MCF 10A (cell line): ENCODE measurements at regions of chr4 and their contacts with region 1.

Region 1: GRCh38 chr4:36269101-36269500 is 12.3 kb upstream of the DTHD1 start:
- DNase-seq: no peak
- H3K4me3 Mint-ChIP-seq: no peak overlapping the region
- H3K27ac Mint-ChIP-seq: no peak overlapping the region
- H3K4me1 Mint-ChIP-seq: peaks cover 9% of the 10 kb centered on the region
- H3K27me3 Mint-ChIP-seq: no peaks in the 10 kb centered on the region
- CTCF ChIP-seq: no peak

Region 2: DNA sequence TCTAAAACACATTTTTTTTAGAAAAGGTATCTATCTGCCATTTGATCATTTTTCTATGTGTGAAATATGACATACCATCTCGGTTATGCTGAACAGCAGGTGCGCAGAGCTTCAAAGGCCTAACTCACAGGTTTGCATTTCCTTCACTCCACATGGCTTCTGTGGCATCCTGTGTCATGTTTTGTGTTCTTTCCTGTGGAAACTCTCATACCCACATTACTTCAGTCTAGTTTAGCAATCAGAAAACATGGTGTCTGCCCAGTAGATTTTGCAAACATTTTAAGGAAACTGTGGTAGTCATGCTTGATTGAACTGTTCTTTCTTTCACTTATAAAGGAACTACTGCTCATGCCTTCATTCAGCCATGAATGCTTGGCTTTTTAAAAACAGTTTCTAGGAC is 13.5 kb before region 1 on chr4:
- CTCF ChIA-PET with region 1: interaction called, 8 read pairs
- POLR2A ChIA-PET with region 1: interaction called, 10 read pairs
- intact Hi-C with region 1: no loop called
- DNase-seq: no peak
- H3K4me3 Mint-ChIP-seq: no peak overlapping the region
- H3K27ac Mint-ChIP-seq: no peak overlapping the region
- H3K4me1 Mint-ChIP-seq: no peaks in the 10 kb centered on the region
- H3K27me3 Mint-ChIP-seq: no peaks in the 10 kb centered on the region
- CTCF ChIP-seq: no peak

Region 3: GRCh38 chr4:36280555-36280954 is 11.5 kb after region 1 on chr4:
- CTCF ChIA-PET with region 1: interaction called, 5 read pairs
- POLR2A ChIA-PET with region 1: interaction called, 10 read pairs
- intact Hi-C with region 1: no loop called
- DNase-seq: peak; percentile 32
- H3K4me3 Mint-ChIP-seq: peak overlapping the region; percentile 45
- H3K27ac Mint-ChIP-seq: peak overlapping the region; percentile 54
- H3K4me1 Mint-ChIP-seq: peaks cover 36% of the 10 kb centered on the region
- H3K27me3 Mint-ChIP-seq: no peaks in the 10 kb centered on the region
- CTCF ChIP-seq: no peak